Activated CD4-positive, alpha-beta memory T cell treated with anti-CD3 and anti-CD28 coated beads, Interleukin-2, amount 10 ng/mL, durations not matched to agents 7 days and 5 days (primary cell): ENCODE measurements at regions of chr3 and their contacts with region 1.

Region 1: GRCh38 chr3:149120051-149120972 is 9.1 kb upstream of the HPS3 start:
- DNase-seq: no peak
- H3K4me3 Mint-ChIP-seq: no peak overlapping the region
- H3K27ac Mint-ChIP-seq: no peak overlapping the region
- H3K4me1 Mint-ChIP-seq: no peaks in the 10 kb centered on the region
- H3K27me3 Mint-ChIP-seq: peaks cover 7% of the 10 kb centered on the region

Region 2: DNA sequence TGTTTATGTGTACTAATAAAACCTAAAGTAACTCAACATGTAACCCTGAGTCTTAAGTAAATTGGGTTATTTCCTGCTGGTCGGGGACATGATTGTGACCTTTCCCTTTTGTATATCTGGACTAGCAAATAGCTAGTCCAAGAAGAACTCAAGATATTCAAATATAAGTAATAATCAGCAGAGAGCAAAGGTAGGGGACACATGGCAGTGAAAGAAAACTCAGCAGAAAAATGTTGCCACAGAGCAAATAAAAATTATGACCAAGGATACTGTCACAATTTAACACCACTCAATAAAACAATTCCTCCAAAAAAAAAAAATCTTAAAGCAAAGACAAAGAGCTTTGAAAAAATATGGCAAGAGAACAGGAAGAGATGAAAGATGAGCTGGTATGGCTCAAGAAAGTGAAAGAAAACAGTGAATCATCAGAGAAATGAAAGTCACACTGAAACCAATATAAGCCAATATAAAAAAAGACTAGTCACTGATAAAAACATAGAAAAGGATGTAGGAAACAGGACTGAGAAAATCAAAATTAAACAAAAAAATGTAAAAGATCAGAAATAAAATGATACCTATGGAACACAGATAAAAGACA is 77.4 kb before region 1 on chr3:
- CTCF ChIA-PET with region 1: no interaction called
- POLR2A ChIA-PET with region 1: no interaction called
- DNase-seq: no peak
- H3K4me3 Mint-ChIP-seq: no peak overlapping the region
- H3K27ac Mint-ChIP-seq: peak overlapping the region; percentile 66
- H3K4me1 Mint-ChIP-seq: peaks cover 23% of the 10 kb centered on the region
- H3K27me3 Mint-ChIP-seq: no peaks in the 10 kb centered on the region

Region 3: DNA sequence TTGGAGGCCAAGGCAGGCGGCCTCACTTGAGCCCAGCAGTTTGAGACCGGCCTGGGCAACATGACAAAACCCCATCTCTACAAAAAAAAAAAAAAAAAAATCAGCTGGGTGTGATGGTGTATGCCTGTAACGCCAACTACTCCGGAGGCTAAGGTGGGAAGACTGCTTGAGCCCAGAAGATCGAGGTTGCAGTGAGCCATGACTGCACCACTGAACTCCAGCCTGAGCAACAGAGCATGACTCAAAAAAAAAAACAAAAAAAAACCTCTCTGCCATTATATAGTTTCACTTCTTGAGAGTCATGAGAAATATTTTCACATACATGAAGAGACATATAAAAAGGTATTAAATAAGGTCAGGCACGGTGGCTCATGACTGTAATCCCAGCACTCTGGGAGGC is 147.3 kb after region 1 on chr3:
- CTCF ChIA-PET with region 1: interaction called, 96 read pairs
- POLR2A ChIA-PET with region 1: no interaction called
- DNase-seq: no peak
- H3K4me3 Mint-ChIP-seq: no peak overlapping the region
- H3K27ac Mint-ChIP-seq: no peak overlapping the region
- H3K4me1 Mint-ChIP-seq: no peaks in the 10 kb centered on the region
- H3K27me3 Mint-ChIP-seq: peaks cover 7% of the 10 kb centered on the region

Region 4: DNA sequence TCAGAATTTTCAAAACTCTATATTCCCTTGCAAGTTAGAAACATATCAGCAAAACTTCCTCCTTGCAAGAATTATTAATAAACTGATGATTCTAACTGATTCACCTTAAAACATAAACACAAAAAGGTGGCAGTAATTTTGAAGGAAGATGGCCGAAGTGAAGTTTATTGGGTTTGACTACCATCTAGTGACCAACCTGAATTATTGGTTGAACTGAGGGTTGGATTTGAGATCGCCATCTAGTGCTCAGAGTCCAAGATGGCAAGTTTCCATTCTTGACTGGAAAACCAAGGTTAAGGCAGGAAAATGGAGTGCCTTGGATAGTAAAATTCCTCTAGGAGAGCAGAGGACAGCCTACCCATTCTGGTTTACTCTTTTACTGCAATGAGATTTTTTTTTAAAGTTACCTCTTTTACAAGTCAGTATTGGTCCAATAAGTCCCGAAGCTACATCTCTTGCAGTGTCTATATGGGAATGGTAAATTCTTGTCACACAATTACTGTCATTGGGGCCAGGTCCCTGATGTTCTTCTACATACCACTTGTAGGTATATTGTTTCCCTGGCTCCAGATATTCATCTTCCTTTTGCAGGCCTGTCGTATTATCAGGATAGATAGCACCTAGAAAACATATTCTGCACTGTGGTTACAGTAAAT is 152.9 kb after region 1 on chr3:
- CTCF ChIA-PET with region 1: interaction called, 96 read pairs
- POLR2A ChIA-PET with region 1: interaction called, 7 read pairs
- DNase-seq: no peak
- H3K4me3 Mint-ChIP-seq: no peak overlapping the region
- H3K27ac Mint-ChIP-seq: no peak overlapping the region
- H3K4me1 Mint-ChIP-seq: peaks cover 11% of the 10 kb centered on the region
- H3K27me3 Mint-ChIP-seq: peaks cover 8% of the 10 kb centered on the region